Naive thymus-derived CD4-positive, alpha-beta T cell (primary cell): ENCODE measurements at regions of chr1 and their contacts with region 1.

Region 1: GRCh38 chr1:113140588-113141446 is 67.8 kb downstream of the LRIG2 start:
- DNase-seq: peak in 8 of 9 donors; percentile 8 to 62 (median 47)
- ATAC-seq: peak; percentile 87
- H3K4me3 ChIP-seq: no peak overlapping the region
- H3K4me3 Mint-ChIP-seq: peak overlapping the region in 2 of 10 donors; percentile 21 to 59
- H3K27ac ChIP-seq: no peak overlapping the region
- H3K27ac Mint-ChIP-seq: peak overlapping the region in 4 of 9 donors; percentile 21 to 49 (median 46)
- H3K4me1 ChIP-seq: peaks cover 0 to 8% of the 10 kb centered on the region in 2 donors
- H3K4me1 Mint-ChIP-seq: peaks cover 8 to 25% (median 19%) of the 10 kb centered on the region in 7 donors
- H3K27me3 ChIP-seq: no peaks in the 10 kb centered on the region
- H3K27me3 Mint-ChIP-seq: no peaks in the 10 kb centered on the region

Region 2: DNA sequence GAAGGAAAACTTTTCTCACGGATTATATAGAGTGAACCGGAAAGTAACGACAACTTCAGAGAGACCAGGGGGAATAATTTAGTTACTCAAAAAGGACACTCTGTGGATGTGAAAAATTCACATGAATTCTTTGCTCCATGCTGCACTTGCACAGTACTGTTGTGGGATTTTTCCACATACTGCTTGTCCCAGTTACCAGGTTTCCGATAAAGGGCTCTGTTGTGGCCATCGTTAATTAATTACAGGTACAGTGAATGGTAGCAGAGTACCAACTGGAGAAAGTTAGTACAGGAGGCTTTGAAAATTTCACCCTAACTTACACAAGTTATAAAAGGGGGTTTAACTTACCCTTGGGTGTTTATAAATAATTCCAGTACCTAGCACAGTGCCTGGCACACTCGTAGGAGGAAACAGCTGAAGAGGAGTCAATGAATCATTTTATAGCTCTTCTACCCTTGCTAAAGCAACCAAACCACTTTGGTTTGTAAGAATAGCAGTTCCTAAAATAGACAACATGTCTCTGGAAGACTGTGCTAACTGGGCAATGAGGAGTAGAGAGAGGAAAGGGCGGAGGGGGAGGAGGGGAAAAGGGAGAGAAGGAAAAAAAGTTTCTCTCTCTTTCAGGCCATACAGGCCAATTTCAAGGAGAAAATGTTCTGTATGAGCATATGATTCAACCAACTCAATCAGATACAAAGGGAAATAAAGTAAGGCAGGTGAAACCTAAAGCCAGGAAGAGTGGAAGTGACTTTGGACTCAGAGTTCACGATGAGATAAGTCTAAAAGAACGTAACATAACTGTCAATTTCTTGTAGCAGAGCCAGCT is 151.2 kb after region 1 on chr1:
- CTCF ChIA-PET with region 1: no interaction called
- POLR2A ChIA-PET with region 1: no interaction called
- intact Hi-C with region 1: no loop called
- DNase-seq: no peak
- ATAC-seq: no peak
- H3K4me3 ChIP-seq: no peak overlapping the region
- H3K4me3 Mint-ChIP-seq: no peak overlapping the region
- H3K27ac ChIP-seq: no peak overlapping the region
- H3K27ac Mint-ChIP-seq: no peak overlapping the region
- H3K4me1 ChIP-seq: no peaks in the 10 kb centered on the region
- H3K4me1 Mint-ChIP-seq: peaks cover 0 to 2% (median 0%) of the 10 kb centered on the region in 7 donors
- H3K27me3 ChIP-seq: no peaks in the 10 kb centered on the region
- H3K27me3 Mint-ChIP-seq: peaks cover 22 to 34% (median 31%) of the 10 kb centered on the region in 5 donors

Region 3: DNA sequence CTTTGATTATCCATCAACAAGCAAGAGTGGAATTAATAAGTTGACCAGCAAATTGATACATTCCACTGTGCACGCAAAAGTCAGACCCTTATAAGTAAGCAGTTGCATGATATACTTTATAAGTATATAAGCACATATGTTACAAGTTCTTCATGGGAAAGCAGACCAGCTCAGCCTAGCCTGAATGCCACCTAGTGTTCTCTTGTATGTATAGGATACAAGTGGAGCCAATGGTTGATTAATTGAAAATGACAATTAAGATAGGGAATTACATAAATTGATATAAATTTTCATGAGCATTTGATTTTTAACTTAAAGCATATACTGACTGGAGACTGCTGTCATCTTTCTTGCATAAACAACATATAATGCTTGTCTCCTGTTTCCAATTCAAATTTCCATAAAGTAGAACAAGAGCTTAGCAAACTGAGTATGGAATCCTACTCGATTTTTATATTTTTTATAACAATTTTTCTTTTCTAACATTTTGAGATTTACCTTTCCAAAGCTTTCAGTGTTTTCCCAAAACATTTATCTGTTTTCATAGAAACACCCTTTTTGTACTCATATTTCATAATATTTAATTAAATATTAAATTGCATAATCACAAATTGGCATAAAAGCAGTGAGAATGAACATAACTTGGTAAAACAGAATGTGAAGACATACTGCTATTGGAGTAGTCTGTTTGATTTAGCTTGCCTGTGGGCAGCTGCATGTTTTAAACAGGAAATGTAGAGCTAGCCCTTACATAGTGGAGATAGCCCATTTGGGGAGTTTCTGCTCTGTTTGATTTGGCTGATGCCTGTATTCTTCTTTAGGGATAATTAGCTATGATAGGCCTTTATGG is 312.3 kb after region 1 on chr1:
- CTCF ChIA-PET with region 1: interaction called, 13 read pairs
- POLR2A ChIA-PET with region 1: no interaction called
- intact Hi-C with region 1: loop called (anchors 1 kb)
- DNase-seq: peak in 7 of 9 donors; percentile 0 to 24 (median 11)
- ATAC-seq: peak; percentile 42
- H3K4me3 ChIP-seq: no peak overlapping the region
- H3K4me3 Mint-ChIP-seq: no peak overlapping the region
- H3K27ac ChIP-seq: no peak overlapping the region
- H3K27ac Mint-ChIP-seq: no peak overlapping the region
- H3K4me1 ChIP-seq: no peaks in the 10 kb centered on the region
- H3K4me1 Mint-ChIP-seq: peaks cover 0 to 8% (median 0%) of the 10 kb centered on the region in 7 donors
- H3K27me3 ChIP-seq: no peaks in the 10 kb centered on the region
- H3K27me3 Mint-ChIP-seq: peaks cover 0 to 5% (median 0%) of the 10 kb centered on the region in 5 donors

Region 4: GRCh38 chr1:113849060-113849459 is 708.2 kb after region 1 on chr1:
- CTCF ChIA-PET with region 1: no interaction called
- POLR2A ChIA-PET with region 1: no interaction called
- intact Hi-C with region 1: loop called in 1 of 2 experiments (anchors 10 kb)
- DNase-seq: no peak
- ATAC-seq: no peak
- H3K4me3 ChIP-seq: no peak overlapping the region
- H3K4me3 Mint-ChIP-seq: no peak overlapping the region
- H3K27ac ChIP-seq: no peak overlapping the region
- H3K27ac Mint-ChIP-seq: no peak overlapping the region
- H3K4me1 ChIP-seq: peaks cover 8 to 10% of the 10 kb centered on the region in 2 donors
- H3K4me1 Mint-ChIP-seq: peaks cover 8 to 16% (median 14%) of the 10 kb centered on the region in 7 donors
- H3K27me3 ChIP-seq: no peaks in the 10 kb centered on the region
- H3K27me3 Mint-ChIP-seq: no peaks in the 10 kb centered on the region

Region 5: DNA sequence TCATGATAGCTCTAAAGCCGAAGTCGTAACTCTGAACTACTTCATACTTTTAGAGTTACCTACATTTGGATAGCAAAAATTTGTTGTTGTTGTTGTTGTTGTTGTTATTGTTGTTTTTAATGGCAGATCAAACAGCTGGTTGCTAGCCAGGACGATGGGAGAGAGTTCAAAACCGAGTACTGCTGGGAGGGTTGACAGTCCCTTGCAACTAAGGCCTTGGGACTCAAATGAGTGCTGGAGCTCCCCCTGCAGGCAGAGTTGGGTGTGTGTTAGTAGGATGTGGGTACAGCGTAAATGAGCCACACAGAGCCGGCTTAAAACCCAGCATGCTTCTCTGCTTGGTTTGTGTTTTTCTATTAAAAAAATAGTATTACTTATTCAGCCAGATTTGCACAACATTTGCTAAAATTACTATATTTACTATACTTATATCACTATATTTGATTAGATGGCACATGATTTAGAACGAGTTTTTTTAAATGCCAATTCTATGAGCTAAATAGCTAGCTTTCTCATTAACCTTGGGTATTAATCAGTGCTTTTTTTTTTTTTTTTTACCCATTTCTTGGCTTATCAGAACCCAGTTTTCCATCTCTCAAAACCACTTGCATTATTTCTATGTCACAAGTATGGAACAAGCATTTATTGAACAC is 1142.1 kb after region 1 on chr1:
- CTCF ChIA-PET with region 1: no interaction called
- POLR2A ChIA-PET with region 1: no interaction called
- intact Hi-C with region 1: loop called (anchors 1 to 5 kb)
- DNase-seq: peak; percentile 65 to 84 (median 78)
- ATAC-seq: peak; percentile 99
- H3K4me3 ChIP-seq: no peak overlapping the region
- H3K4me3 Mint-ChIP-seq: no peak overlapping the region
- H3K27ac ChIP-seq: no peak overlapping the region
- H3K27ac Mint-ChIP-seq: no peak overlapping the region
- H3K4me1 ChIP-seq: no peaks in the 10 kb centered on the region
- H3K4me1 Mint-ChIP-seq: peaks cover 0 to 9% (median 0%) of the 10 kb centered on the region in 7 donors
- H3K27me3 ChIP-seq: no peaks in the 10 kb centered on the region
- H3K27me3 Mint-ChIP-seq: peaks cover 0 to 25% (median 0%) of the 10 kb centered on the region in 5 donors

Region 6: DNA sequence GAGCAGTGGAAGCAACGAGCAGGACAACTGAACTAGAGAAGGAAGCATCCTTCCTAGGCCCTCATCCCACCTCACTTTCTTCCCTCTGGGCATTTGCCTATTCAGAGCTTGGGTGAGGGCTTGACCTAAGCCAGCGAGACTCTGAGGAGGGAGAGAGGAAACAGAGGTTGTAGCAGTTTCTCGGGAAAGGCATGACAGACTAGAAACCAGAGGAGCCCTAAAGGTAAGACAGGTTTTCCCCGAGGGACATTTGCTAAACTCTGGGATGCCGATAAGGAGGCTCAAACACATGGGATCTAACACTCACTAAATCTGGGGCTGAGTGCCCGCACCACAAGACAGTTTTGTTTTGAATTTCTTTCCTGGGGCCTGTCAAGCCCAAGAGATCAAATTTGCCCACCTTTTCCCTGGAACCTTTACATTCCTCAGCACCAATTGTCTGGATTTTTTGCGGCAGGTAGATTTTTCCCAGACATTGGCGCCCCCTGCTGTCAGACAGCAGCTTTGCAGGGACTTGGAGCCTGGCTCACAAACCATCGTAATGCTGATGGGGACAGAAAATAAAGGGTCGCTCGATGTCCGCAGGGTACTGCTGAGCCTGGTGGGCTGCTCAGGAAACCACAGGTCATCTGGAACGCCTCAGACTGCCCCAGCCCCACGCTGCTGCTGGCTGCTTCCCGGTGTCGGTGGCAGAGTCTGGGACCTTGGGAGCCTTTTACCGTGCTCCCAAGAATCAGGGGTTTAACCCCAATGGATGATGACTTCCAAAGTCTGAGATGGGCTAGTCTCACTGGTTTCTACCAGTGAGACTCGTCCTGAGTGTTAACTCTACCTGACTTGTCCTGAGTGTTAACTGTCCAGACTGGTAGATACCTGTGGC is 1971.9 kb after region 1 on chr1:
- CTCF ChIA-PET with region 1: no interaction called
- POLR2A ChIA-PET with region 1: no interaction called
- intact Hi-C with region 1: loop called in 1 of 2 experiments (anchors 5 kb)
- DNase-seq: peak; percentile 18 to 62 (median 40)
- ATAC-seq: peak; percentile 61
- H3K4me3 ChIP-seq: no peak overlapping the region
- H3K4me3 Mint-ChIP-seq: no peak overlapping the region
- H3K27ac ChIP-seq: no peak overlapping the region
- H3K27ac Mint-ChIP-seq: peak overlapping the region in 5 of 9 donors; percentile 23 to 63 (median 39)
- H3K4me1 ChIP-seq: no peaks in the 10 kb centered on the region
- H3K4me1 Mint-ChIP-seq: peaks cover 0 to 18% (median 8%) of the 10 kb centered on the region in 7 donors
- H3K27me3 ChIP-seq: no peaks in the 10 kb centered on the region
- H3K27me3 Mint-ChIP-seq: peaks cover 0 to 3% (median 0%) of the 10 kb centered on the region in 5 donors